ENCODE measurements at regions of chr18 and their contacts with region 1.

Region 1: DNA sequence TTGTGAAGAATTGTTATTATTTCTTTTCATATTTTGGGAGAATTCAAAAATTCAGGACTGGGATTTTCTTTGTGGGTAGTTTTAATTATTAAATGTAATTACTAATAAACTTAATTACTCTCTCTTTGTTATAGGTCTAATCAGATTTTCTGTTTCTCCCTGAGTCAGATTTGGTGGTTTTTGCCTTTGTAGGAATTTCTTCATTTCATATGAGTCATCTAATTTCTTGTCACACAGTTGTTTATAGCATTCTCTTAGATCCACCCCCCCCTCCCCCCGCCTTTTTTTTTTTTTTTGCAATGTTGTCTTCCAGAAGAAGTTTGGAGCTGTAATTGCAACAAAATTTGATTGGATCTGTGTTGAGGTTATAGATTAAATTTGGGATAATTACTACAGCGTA is 26.0 kb upstream of the GALR1 start:
- DNase-seq: peak; percentile 63
- H3K4me3 Mint-ChIP-seq: no peak overlapping the region
- H3K27ac Mint-ChIP-seq: peak overlapping the region; percentile 76
- H3K4me1 Mint-ChIP-seq: peaks cover 10% of the 10 kb centered on the region
- H3K27me3 Mint-ChIP-seq: peaks cover 26% of the 10 kb centered on the region
- CTCF ChIP-seq: no peak

Region 2: DNA sequence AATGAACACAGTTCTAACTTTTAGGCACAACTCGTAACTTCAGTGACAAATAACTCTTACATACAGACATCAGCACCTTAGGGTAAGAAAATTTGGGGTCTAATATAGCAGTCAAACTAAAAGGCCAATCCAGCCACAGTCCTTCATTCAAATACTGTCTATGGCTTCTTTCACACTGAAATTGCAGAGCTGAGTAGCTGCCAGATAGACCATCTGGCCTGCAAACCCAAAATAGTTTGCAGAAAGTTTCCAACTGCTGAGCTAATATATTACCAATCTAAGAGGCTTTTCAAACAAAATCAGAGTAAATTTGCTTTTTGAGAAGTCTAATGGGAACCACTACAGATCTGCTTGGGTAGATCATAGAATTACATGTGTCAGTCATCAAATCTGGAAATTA is 209.4 kb after region 1 on chr18:
- CTCF ChIA-PET with region 1: no interaction called
- POLR2A ChIA-PET with region 1: no interaction called
- intact Hi-C with region 1: loop called (anchors 10 kb)
- DNase-seq: no peak
- H3K4me3 Mint-ChIP-seq: no peak overlapping the region
- H3K27ac Mint-ChIP-seq: no peak overlapping the region
- H3K4me1 Mint-ChIP-seq: no peaks in the 10 kb centered on the region
- H3K27me3 Mint-ChIP-seq: peaks cover 48% of the 10 kb centered on the region
- CTCF ChIP-seq: no peak

Measured in MCF 10A (cell line).